ENCODE measurements at regions of chr11 and their contacts with region 1.

Region 1: GRCh38 chr11:43825217-43825816 is 55.3 kb upstream of the ALKBH3 start:
- DNase-seq: peak; percentile 8
- ATAC-seq: peak; percentile 64; the same call in 2 of the 3 replicates
- H3K4me3 ChIP-seq: no peak overlapping the region
- H3K27ac ChIP-seq: no peak overlapping the region
- H3K4me1 ChIP-seq: peaks cover 11% of the 10 kb centered on the region; the same call in 1 of the 2 replicates
- H3K27me3 ChIP-seq: no peaks in the 10 kb centered on the region
- CTCF ChIP-seq: peak; percentile 48
- EP300 ChIP-seq: no peak
- POLR2A ChIP-seq: no peak
- RAD21 ChIP-seq: no peak

Region 2: DNA sequence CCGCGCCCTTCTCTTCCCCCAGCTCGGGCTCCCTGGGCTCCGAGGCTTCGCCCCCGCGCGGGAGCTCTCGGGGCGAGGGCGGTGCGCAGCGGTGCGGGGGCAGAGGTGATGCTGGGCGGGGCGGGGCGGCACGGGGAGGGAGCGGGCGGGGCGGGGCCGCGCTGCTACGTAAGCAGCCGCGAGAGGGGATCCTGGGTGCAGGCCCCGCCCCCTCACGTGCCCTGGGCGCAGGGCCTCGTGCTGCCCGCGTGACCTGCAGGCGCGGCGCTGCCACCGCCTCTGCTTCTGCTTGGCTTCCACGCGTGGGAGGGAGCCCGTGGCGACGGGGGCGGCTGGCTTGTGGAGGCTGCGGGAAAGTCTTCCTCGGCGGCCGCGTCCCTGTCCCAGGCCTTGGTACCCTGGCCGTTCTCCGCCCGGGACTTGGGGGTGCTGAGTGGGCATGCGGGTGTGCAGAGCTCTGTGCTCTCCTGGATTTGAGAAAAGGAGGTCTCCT is 277.4 kb before region 1 on chr11:
- CTCF ChIA-PET with region 1: no interaction called
- POLR2A ChIA-PET with region 1: no interaction called
- in situ Hi-C with region 1: no loop called
- intact Hi-C with region 1: no loop called
- DNase-seq: no peak
- ATAC-seq: peak; percentile 21; the same call in 1 of the 3 replicates
- H3K4me3 ChIP-seq: no peak overlapping the region
- H3K27ac ChIP-seq: no peak overlapping the region
- H3K4me1 ChIP-seq: peaks cover 17% of the 10 kb centered on the region
- H3K27me3 ChIP-seq: peaks cover 4 to 42% of the 10 kb centered on the region in 2 experiments; a peak in 4 of 5 replicates
- CTCF ChIP-seq: no peak
- EP300 ChIP-seq: no peak
- POLR2A ChIP-seq: no peak
- RAD21 ChIP-seq: no peak

Region 3: DNA sequence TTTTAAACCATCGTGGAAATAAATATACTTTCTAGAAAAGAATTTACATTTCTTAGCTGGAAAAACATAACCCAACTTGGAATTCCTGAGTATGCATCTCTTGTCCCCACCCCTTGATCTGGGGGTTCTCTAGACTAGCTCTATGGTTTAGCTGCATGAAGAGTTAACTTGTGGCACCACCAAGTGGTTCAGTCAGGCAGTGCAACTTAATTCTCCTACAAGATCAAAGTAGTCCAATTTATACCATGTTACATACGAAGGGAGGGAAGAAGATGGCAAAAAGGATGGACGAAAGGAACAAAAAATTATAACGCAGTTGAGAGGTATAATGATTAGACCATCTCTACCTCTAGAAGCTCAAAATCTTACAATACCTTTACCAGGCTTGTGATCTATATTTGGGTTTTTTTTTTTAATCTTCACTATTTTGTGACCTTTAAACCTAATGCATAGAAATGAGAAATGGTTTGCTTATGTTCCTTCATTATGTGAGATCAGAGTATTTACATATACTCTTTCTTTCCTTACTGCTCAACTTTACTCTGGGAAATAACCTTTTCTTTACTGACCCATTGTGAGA is 26.8 kb after region 1 on chr11:
- CTCF ChIA-PET with region 1: interaction called, 19 read pairs
- POLR2A ChIA-PET with region 1: interaction called, 3 read pairs
- in situ Hi-C with region 1: no loop called
- intact Hi-C with region 1: loop called (anchors 1 kb)
- DNase-seq: peak; percentile 48
- ATAC-seq: peak; percentile 89
- H3K4me3 ChIP-seq: no peak overlapping the region
- H3K27ac ChIP-seq: no peak overlapping the region
- H3K4me1 ChIP-seq: no peaks in the 10 kb centered on the region
- H3K27me3 ChIP-seq: no peaks in the 10 kb centered on the region
- CTCF ChIP-seq: peak; percentile 69
- EP300 ChIP-seq: no peak
- POLR2A ChIP-seq: no peak
- RAD21 ChIP-seq: no peak

Measured in HepG2 (cell line).